Heart right ventricle (tissue), 16 donors: ENCODE measurements at regions of chr2 and their contacts with region 1.

Region 1: DNA sequence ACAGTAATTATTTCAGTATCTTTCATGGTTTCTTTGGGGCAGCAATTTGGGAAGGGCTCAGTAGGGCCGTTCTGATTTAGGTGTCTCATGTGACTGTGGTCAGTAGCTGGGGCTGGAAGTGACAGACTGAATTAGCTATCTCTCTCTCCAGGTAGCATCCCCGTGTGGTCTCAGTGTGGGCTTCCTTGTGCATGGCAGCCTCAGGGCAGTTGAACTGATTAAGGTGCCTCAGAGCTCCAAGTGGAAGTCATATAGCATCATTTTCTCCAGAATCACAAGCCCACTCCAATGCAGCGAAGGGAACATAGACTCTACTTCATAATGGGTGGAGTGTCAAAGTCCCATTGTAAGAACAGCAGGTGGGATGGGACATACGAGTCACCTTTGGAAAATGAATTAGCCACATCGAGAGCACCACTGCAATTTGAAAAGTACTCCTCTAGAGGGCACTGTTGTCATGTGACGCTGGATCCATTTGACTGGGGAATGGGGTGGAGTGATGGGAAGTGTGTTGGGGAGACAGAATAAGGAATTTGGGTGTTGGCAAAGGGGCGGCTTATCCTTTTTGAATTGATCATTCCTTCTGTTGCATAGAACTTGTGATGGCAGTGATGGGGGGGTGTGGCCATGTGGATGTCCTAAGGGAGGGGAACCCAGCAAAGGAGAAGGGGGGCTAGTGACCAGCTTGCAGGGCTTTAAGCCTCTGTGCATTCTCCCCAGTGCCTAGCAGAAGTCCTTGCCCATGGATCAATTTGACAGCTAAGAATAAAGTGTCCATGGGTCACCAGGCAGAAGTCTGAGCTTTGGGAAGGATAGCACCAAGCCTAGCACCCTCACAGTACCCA is 39.3 kb upstream of the FAM136A start:
- DNase-seq: peak in 1 of 2 donors; percentile 9
- ATAC-seq: peak in 7 of 8 donors; percentile 35 to 62 (median 45)
- H3K4me3 ChIP-seq: no peak overlapping the region
- H3K27ac ChIP-seq: no peak overlapping the region
- H3K4me1 ChIP-seq: no peaks in the 10 kb centered on the region
- H3K27me3 ChIP-seq: peaks cover 0 to 32% (median 16%) of the 10 kb centered on the region in 7 donors
- CTCF ChIP-seq: peak; percentile 46 to 87 (median 77)

Region 2: DNA sequence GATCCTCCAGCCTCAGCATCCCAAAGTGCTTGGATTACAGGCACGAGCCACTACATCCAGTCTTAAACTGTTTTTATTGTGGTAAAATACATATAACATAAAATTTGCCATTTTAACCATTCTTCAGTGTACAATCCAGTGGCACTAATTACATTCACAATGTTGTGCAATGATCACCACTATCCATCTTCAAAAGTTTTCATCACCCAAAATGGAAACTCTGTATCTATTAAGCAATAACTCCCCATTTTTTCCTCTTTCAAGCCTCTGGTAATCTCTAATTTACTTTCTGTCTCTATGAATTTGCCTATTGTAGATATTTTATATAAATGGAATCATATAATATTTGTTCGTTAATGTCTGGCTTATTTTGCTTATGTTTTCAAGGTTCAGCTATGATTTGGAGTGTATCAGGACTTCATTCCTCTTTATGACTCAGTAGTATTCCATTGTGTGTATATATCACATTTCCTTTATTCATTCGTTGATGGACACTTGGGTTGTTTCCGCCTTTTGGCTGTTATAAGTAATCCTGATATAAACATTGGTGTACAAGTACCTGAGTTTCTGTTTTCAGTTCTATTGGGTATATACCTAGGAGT is 1025.9 kb before region 1 on chr2:
- intact Hi-C with region 1: no loop called
- DNase-seq: no peak
- ATAC-seq: no peak
- H3K4me3 ChIP-seq: no peak overlapping the region
- H3K27ac ChIP-seq: no peak overlapping the region
- H3K4me1 ChIP-seq: peaks cover 0 to 10% (median 4%) of the 10 kb centered on the region in 9 donors
- H3K27me3 ChIP-seq: no peaks in the 10 kb centered on the region
- CTCF ChIP-seq: no peak

Region 3: GRCh38 chr2:70420128-70420530 is 79.0 kb after region 1 on chr2:
- intact Hi-C with region 1: no loop called
- DNase-seq: no peak
- ATAC-seq: no peak
- H3K4me3 ChIP-seq: no peak overlapping the region
- H3K27ac ChIP-seq: no peak overlapping the region
- H3K4me1 ChIP-seq: no peaks in the 10 kb centered on the region
- H3K27me3 ChIP-seq: peaks cover 0 to 23% (median 5%) of the 10 kb centered on the region in 7 donors
- CTCF ChIP-seq: no peak

Region 4: GRCh38 chr2:70553584-70554337 is 212.6 kb after region 1 on chr2 and contains the start of gene TGFA:
- intact Hi-C with region 1: loop called in 2 of 10 experiments (anchors 5 to 10 kb)
- DNase-seq: peak; percentile 41 to 65
- ATAC-seq: peak; percentile 83 to 95 (median 86)
- H3K4me3 ChIP-seq: peak within 1 kb of the TSS; percentile 42 to 82 (median 74)
- H3K27ac ChIP-seq: peak within 1 kb of the TSS in 8 of 10 donors; percentile 2 to 90 (median 54)
- H3K4me1 ChIP-seq: peaks cover 0 to 29% (median 14%) of the 10 kb centered on the region in 9 donors
- H3K27me3 ChIP-seq: peaks cover 6 to 78% (median 56%) of the 10 kb centered on the region in 7 donors
- CTCF ChIP-seq: peak in 8 of 9 donors; percentile 42 to 82 (median 72)
- total RNA-seq, gene TGFA: 0.28 to 3.4 (median 1.3) TPM

Region 5: DNA sequence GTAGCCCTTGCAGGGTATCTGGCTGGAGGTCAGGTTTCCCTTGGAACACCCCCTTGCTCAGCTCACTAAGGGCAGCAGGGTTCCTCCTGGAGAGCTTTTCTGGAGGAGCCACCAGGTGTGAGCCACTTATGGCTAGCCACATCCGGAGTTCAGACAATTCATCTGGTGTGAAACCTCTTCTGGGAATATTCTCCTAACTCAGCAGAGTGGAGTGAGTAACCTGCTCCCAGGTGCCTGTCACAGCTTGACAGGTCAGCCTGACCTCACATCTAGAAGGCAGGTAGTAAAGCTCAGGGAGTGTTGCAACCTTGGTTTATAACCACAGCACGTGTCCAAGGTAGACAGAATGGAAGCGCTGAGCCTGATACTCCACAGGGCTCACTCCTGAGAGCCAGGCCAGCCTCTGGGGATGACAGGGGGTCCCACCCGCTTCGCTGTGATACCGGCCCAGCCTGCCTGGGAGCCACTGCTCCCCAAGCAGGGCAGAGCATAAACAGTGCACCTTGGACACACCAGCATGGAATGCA is 275.1 kb after region 1 on chr2:
- intact Hi-C with region 1: loop called (anchors 1 to 5 kb)
- DNase-seq: no peak
- ATAC-seq: no peak
- H3K4me3 ChIP-seq: no peak overlapping the region
- H3K27ac ChIP-seq: no peak overlapping the region
- H3K4me1 ChIP-seq: no peaks in the 10 kb centered on the region
- H3K27me3 ChIP-seq: peaks cover 0 to 15% (median 0%) of the 10 kb centered on the region in 7 donors
- CTCF ChIP-seq: no peak

Region 6: GRCh38 chr2:70647873-70648481 is 306.8 kb after region 1 on chr2:
- intact Hi-C with region 1: loop called in 7 of 10 experiments (anchors 2 to 10 kb)
- DNase-seq: peak; percentile 41 to 59
- ATAC-seq: peak in 5 of 8 donors; percentile 48 to 68 (median 57)
- H3K4me3 ChIP-seq: no peak overlapping the region
- H3K27ac ChIP-seq: no peak overlapping the region
- H3K4me1 ChIP-seq: no peaks in the 10 kb centered on the region
- H3K27me3 ChIP-seq: peaks cover 0 to 40% (median 8%) of the 10 kb centered on the region in 7 donors
- CTCF ChIP-seq: peak; percentile 66 to 96 (median 88)